Activated naive CD8-positive, alpha-beta T cell treated with anti-CD3 and anti-CD28 coated beads, Interleukin-2, amount 10 ng/mL, durations not matched to agents 7 days and 5 days (primary cell): ENCODE measurements at regions of chr14 and their contacts with region 1.

Region 1: GRCh38 chr14:45253068-45253753 is at the start of gene MIS18BP1:
- DNase-seq: peak; percentile 90
- ATAC-seq: peak; percentile 93
- H3K4me3 Mint-ChIP-seq: peak within 1 kb of the TSS; percentile 85
- H3K27ac Mint-ChIP-seq: peak within 1 kb of the TSS; percentile 95
- H3K4me1 Mint-ChIP-seq: peaks cover 14% of the 10 kb centered on the region
- H3K27me3 Mint-ChIP-seq: no peaks in the 10 kb centered on the region
- total RNA-seq, gene MIS18BP1: 52.0 to 57.2 TPM

Region 2: GRCh38 chr14:45134051-45134958 is 118.9 kb before region 1 on chr14 and contains the start of gene FKBP3:
- POLR2A ChIA-PET with region 1: interaction called, 17 read pairs
- DNase-seq: peak; percentile 88
- ATAC-seq: peak; percentile 95
- H3K4me3 Mint-ChIP-seq: peak within 1 kb of the TSS; percentile 100
- H3K27ac Mint-ChIP-seq: peak within 1 kb of the TSS; percentile 100
- H3K4me1 Mint-ChIP-seq: peaks cover 34% of the 10 kb centered on the region
- H3K27me3 Mint-ChIP-seq: no peaks in the 10 kb centered on the region
- total RNA-seq, gene FKBP3: 65.7 to 67.1 TPM

Region 3: GRCh38 chr14:45284802-45285201 is 31.6 kb after region 1 on chr14:
- POLR2A ChIA-PET with region 1: no interaction called
- DNase-seq: no peak
- ATAC-seq: no peak
- H3K4me3 Mint-ChIP-seq: no peak overlapping the region
- H3K27ac Mint-ChIP-seq: no peak overlapping the region
- H3K4me1 Mint-ChIP-seq: no peaks in the 10 kb centered on the region
- H3K27me3 Mint-ChIP-seq: peaks cover 4% of the 10 kb centered on the region

Region 4: DNA sequence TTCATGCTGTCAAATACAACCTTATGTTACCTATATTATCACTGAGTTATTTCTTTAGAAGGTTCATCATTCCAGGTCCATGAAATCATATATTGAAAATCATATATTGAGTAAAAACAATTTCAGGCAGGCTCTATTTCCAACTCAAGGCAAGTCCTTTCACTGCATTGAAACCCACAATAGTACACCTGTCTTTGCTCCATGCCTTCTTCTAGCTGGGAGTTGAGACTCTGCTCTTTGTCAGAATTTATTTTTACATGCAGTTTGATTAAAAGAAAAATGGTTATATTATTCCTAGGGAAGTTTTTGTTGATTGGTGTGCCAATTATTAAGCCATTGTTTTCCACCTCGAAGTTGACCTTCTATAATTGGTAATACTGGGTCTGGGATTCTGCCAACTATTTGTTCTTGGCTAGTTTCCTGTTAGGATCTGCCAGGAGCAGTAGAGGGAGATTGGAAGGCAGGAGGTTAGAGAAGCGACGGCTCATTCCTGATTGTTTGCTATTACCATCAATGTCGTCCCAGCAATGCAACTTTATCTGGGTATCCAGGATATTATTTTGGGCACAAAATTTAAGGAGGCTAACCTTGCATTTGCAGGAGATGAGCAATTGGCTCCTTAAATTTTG is 79.3 kb after region 1 on chr14:
- POLR2A ChIA-PET with region 1: no interaction called
- DNase-seq: no peak
- ATAC-seq: no peak
- H3K4me3 Mint-ChIP-seq: no peak overlapping the region
- H3K27ac Mint-ChIP-seq: no peak overlapping the region
- H3K4me1 Mint-ChIP-seq: no peaks in the 10 kb centered on the region
- H3K27me3 Mint-ChIP-seq: no peaks in the 10 kb centered on the region